Posterior vena cava (tissue), 2 donors: ENCODE measurements at regions of chr14 and their contacts with region 1.

Region 1: GRCh38 chr14:51989293-51990234 is at the start of gene RTRAF:
- DNase-seq: peak; percentile 98
- total RNA-seq, gene RTRAF: 128 to 131 TPM

Region 2: DNA sequence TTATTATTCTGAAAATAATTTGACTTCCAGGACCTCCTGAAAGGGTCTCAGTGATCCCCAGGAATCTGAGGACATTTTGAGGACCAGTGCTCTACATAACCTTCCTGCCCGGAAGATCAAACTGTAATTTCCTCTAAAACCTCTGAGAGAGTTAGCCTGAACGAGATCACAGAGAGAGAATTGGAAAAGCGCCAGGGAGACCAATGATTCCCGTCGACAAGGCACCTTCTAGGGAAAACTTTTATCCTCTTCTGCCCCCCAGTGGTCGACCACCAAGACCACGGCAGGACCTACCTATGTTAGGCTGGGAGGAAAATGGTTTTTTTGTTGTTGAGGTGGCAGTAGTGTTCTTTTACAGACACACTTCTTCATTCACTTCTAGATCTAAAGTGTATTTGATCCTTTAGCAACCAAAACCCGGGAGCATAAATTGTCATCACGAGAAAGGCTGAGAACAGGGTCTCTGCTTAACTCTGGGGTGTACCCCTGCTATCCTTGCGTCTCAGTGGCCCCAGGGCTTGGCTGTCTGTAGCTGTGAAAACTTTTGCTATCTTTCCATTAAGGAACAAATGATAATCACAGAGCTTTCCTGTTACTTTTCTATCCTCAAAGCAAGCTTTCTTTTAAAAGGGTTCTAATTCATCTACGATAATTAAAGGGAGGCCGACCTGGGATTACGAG is 142.2 kb after region 1 on chr14:
- intact Hi-C with region 1: loop called in 1 of 2 experiments (anchors 10 kb)
- DNase-seq: no peak

Region 3: GRCh38 chr14:52267501-52268278 is 278.1 kb after region 1 on chr14 and contains the start of gene PTGDR:
- intact Hi-C with region 1: loop called in 1 of 2 experiments (anchors 10 kb)
- DNase-seq: peak; percentile 90
- total RNA-seq, gene PTGDR: 2.9 to 4.5 TPM

Region 4: DNA sequence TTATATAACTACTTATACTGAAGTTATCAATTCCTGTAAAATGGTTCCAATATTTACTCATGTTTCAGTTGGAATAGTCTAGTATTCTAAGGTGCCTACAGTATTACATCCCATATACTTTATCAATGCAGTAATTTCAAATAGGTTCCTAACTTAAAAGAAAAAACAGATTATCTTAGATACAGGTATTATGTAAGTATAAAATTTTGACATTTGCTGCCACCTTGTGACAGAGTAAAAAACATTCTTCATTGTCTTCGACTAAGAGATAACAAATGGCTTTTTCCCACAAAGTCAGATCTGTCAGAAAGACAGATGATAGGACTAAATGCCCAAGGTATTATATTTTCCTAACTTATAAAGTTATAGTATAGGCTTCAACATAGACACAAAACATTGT is 484.0 kb after region 1 on chr14:
- intact Hi-C with region 1: loop called in 1 of 2 experiments (anchors 10 kb)
- DNase-seq: no peak